Activated CD4-positive, alpha-beta memory T cell treated with anti-CD3 and anti-CD28 coated beads for 36 hours (primary cell): ENCODE measurements at regions of chr12 and their contacts with region 1.

Region 1: GRCh38 chr12:24852420-24852819 is 96.5 kb downstream of the BCAT1 start:
- DNase-seq: no peak
- H3K4me3 Mint-ChIP-seq: no peak overlapping the region
- H3K27ac Mint-ChIP-seq: no peak overlapping the region
- H3K4me1 Mint-ChIP-seq: peaks cover 16% of the 10 kb centered on the region
- H3K27me3 Mint-ChIP-seq: peaks cover 14% of the 10 kb centered on the region

Region 2: GRCh38 chr12:25130741-25131188 is 278.3 kb after region 1 on chr12:
- CTCF ChIA-PET with region 1: interaction called, 11 read pairs
- POLR2A ChIA-PET with region 1: no interaction called
- intact Hi-C with region 1: loop called (anchors 10 kb)
- DNase-seq: no peak
- H3K4me3 Mint-ChIP-seq: no peak overlapping the region
- H3K27ac Mint-ChIP-seq: no peak overlapping the region
- H3K4me1 Mint-ChIP-seq: no peaks in the 10 kb centered on the region
- H3K27me3 Mint-ChIP-seq: no peaks in the 10 kb centered on the region